Activated naive CD8-positive, alpha-beta T cell treated with anti-CD3 and anti-CD28 coated beads, Interleukin-2, amount 10 ng/mL, durations not matched to agents 7 days and 5 days (primary cell): ENCODE measurements at regions of chr1 and their contacts with region 1.

Region 1: GRCh38 chr1:228139944-228140656 is at the start of gene GUK1:
- DNase-seq: peak; percentile 99
- ATAC-seq: peak; percentile 89
- H3K4me3 Mint-ChIP-seq: peak within 1 kb of the TSS; percentile 96
- H3K27ac Mint-ChIP-seq: peak within 1 kb of the TSS; percentile 98
- H3K4me1 Mint-ChIP-seq: peaks cover 39% of the 10 kb centered on the region
- H3K27me3 Mint-ChIP-seq: peaks cover 16% of the 10 kb centered on the region
- total RNA-seq, gene GUK1: 289 to 327 TPM

Region 2: GRCh38 chr1:228109073-228109961 is 30.8 kb before region 1 on chr1 and contains the start of gene MRPL55:
- POLR2A ChIA-PET with region 1: interaction called, 11 read pairs
- DNase-seq: peak; percentile 100
- ATAC-seq: peak; percentile 93
- H3K4me3 Mint-ChIP-seq: peak within 1 kb of the TSS; percentile 98
- H3K27ac Mint-ChIP-seq: peak within 1 kb of the TSS; percentile 96
- H3K4me1 Mint-ChIP-seq: peaks cover 20% of the 10 kb centered on the region
- H3K27me3 Mint-ChIP-seq: peaks cover 2% of the 10 kb centered on the region
- total RNA-seq, gene MRPL55: 53.6 to 53.7 TPM

Region 3: DNA sequence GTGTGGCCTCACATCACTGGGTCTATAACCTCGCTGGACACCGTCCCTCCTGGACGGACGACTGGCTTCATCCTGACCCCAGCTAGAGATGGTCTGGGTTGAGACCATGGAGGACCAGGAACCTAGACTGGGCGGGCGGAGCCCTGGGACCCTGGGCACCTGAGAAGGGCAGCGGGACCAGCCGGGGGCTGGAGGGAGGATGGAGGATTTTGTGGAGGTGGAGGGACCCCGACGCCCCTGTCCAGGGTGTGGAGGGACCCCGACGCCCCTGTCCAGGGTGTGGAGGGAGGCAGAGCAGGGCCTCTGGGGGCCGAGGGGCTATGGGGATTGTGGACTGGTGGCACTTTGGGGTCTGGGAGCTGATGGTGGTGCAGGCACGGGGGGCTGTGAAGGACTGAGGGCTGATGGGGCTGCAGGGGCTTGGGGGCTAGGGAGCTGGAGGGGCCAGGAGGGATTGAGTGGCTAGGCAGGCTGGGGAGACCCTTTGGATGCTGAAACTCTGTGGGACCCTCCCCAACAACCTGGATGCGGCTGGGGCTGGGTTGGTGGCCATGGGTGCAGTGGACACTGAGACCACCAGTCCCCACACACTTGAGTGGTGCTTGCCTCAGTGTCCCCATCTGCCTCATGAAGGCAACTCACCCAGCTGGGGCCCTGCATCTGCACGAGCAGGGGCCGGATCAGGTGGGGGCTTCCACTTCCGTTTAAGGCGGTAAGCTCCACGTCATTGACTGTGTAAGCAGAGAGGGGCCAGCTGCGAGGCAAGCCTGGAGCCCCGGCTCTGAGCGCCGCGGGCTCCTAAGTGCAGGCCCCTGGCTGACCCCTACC is 17.0 kb after region 1 on chr1:
- POLR2A ChIA-PET with region 1: interaction called, 23 read pairs
- DNase-seq: peak; percentile 66
- ATAC-seq: peak; percentile 79
- H3K4me3 Mint-ChIP-seq: peak overlapping the region; percentile 82
- H3K27ac Mint-ChIP-seq: peak overlapping the region; percentile 89
- H3K4me1 Mint-ChIP-seq: peaks cover 22% of the 10 kb centered on the region
- H3K27me3 Mint-ChIP-seq: no peaks in the 10 kb centered on the region

Region 4: DNA sequence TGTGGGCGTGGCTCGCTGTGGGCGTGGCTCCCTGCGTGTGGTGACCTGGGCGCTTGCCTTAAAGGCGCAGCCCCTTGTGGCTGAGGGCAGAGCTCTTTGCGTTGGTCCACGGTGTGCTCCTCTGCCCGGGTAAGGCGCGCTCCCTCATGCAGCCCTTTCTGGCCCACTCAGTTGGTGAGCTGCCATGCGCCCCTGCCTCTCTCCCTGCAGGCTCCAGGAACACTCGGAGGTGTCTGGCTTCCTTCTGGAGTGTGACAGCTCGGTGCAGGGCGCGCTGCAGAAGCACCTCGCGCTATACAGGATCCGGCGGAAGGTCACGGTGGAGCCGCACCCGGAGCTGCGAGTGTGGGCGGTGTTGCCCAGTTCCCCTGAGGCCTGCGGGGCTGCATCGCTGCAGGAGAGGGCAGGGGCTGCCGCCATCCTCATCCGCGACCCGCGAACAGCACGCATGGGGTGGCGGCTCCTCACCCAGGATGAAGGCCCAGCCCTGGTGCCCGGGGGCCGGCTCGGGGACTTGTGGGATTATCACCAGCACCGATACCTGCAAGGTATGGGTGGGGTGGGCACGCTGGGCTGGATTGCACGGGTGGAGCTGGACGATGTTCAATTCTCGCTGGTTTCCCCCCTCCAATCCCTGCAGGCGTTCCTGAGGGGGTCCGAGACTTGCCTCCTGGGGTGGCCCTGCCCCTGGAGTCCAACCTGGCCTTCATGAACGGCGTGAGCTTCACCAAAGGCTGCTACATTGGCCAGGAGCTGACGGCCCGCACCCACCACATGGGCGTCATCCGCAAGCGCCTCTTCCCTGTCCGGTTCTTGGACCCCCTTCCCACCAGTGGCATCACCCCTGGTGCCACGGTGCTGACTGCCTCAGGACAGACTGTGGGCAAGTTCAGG is 34.6 kb after region 1 on chr1:
- POLR2A ChIA-PET with region 1: no interaction called
- DNase-seq: no peak
- ATAC-seq: no peak
- H3K4me3 Mint-ChIP-seq: no peak overlapping the region
- H3K27ac Mint-ChIP-seq: no peak overlapping the region
- H3K4me1 Mint-ChIP-seq: peaks cover 2% of the 10 kb centered on the region
- H3K27me3 Mint-ChIP-seq: no peaks in the 10 kb centered on the region